MCF 10A (cell line): ENCODE measurements at regions of chrX and their contacts with region 1.

Region 1: DNA sequence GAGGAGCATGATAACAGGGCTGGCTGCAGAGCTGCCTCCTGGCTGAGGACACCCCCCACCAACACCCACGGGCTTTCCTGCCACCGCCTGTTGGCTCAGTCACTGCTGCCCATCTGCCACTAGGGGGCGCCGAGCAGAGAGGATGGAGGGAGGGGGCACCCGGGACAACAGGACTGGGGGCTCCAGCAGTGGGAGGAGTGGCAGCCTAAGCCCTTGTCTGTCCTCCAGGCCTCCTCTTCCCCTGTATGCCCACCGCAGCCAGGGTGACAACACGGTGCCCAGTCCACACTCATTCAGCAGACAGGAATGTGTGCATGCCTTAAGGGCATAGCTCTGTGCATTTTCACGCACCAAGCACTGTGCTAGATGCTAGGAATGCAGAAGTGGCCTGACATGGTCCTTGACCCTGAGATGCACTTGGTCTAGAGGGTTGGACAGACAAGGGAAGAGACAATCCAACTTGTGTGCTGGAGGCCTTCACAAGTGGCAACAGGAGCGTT is 149.9 kb downstream of the AMMECR1 start:
- DNase-seq: peak; percentile 49
- H3K4me3 Mint-ChIP-seq: no peak overlapping the region
- H3K27ac Mint-ChIP-seq: no peak overlapping the region
- H3K4me1 Mint-ChIP-seq: peaks cover 20% of the 10 kb centered on the region
- H3K27me3 Mint-ChIP-seq: peaks cover 18% of the 10 kb centered on the region
- CTCF ChIP-seq: peak; percentile 54

Region 2: DNA sequence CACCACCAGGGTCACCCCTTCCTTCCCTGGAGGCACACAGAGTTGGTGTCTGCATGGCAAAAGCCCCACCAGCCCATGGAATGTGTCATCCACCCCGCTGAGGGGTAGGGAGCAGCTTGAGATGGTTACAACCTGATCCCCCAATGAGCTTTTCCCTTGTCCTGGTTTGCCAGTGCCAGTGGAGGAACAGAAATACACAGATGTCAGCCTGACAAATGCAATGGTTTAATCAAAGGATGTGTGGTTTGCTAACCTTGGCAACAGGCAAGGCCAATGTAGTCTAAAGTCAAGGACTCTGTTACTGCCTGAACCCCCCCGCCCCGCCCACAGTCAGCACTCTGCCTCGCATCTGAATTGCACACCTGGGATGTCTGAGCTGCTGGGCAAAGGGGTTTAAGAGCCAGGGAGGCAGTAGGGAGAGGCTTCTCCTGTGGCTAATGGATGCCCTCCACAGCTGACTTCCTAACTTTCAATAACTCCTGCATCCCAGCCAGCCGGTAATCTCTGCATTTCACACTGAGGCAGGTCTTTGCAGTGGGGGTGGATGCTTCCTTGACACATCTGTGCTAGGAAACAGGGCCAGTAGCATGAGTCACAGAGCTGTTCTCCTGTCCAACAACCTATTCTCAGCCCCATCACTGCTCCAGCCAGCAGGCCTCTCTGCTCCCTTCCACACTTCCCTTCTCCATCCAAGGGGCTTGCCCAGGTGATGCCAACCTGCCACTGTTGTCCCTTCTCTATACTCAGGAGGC is 12.3 kb after region 1 on chrX:
- CTCF ChIA-PET with region 1: interaction called, 3 read pairs
- POLR2A ChIA-PET with region 1: interaction called, 3 read pairs
- intact Hi-C with region 1: loop called (anchors 1 kb)
- DNase-seq: peak; percentile 75
- H3K4me3 Mint-ChIP-seq: no peak overlapping the region
- H3K27ac Mint-ChIP-seq: peak overlapping the region; percentile 47
- H3K4me1 Mint-ChIP-seq: peaks cover 37% of the 10 kb centered on the region
- H3K27me3 Mint-ChIP-seq: peaks cover 78% of the 10 kb centered on the region
- CTCF ChIP-seq: no peak

Region 3: GRCh38 chrX:110210417-110211139 is 42.6 kb after region 1 on chrX:
- CTCF ChIA-PET with region 1: interaction called, 3 read pairs
- POLR2A ChIA-PET with region 1: interaction called, 3 read pairs
- intact Hi-C with region 1: loop called (anchors 5 kb)
- DNase-seq: peak; percentile 61
- H3K4me3 Mint-ChIP-seq: peak overlapping the region; percentile 44
- H3K27ac Mint-ChIP-seq: peak overlapping the region; percentile 85
- H3K4me1 Mint-ChIP-seq: peaks cover 14% of the 10 kb centered on the region
- H3K27me3 Mint-ChIP-seq: peaks cover 57% of the 10 kb centered on the region
- CTCF ChIP-seq: no peak